Naive thymus-derived CD4-positive, alpha-beta T cell (primary cell): ENCODE measurements at regions of chr6 and their contacts with region 1.

Region 1: GRCh38 chr6:85404502-85405174 is 45.2 kb upstream of the NT5E start:
- DNase-seq: no peak
- ATAC-seq: no peak
- H3K4me3 ChIP-seq: no peak overlapping the region
- H3K4me3 Mint-ChIP-seq: peak overlapping the region in 2 of 10 donors; percentile 1 to 68
- H3K27ac ChIP-seq: no peak overlapping the region
- H3K27ac Mint-ChIP-seq: peak overlapping the region in 4 of 9 donors; percentile 11 to 83 (median 43)
- H3K4me1 ChIP-seq: no peaks in the 10 kb centered on the region
- H3K4me1 Mint-ChIP-seq: peaks cover 0 to 62% (median 7%) of the 10 kb centered on the region in 7 donors
- H3K27me3 ChIP-seq: no peaks in the 10 kb centered on the region
- H3K27me3 Mint-ChIP-seq: peaks cover 0 to 9% (median 4%) of the 10 kb centered on the region in 5 donors

Region 2: GRCh38 chr6:85443349-85444119 is 38.9 kb after region 1 on chr6:
- CTCF ChIA-PET with region 1: no interaction called
- POLR2A ChIA-PET with region 1: no interaction called
- intact Hi-C with region 1: no loop called
- DNase-seq: no peak
- ATAC-seq: no peak
- H3K4me3 ChIP-seq: no peak overlapping the region
- H3K4me3 Mint-ChIP-seq: no peak overlapping the region
- H3K27ac ChIP-seq: no peak overlapping the region
- H3K27ac Mint-ChIP-seq: no peak overlapping the region
- H3K4me1 ChIP-seq: no peaks in the 10 kb centered on the region
- H3K4me1 Mint-ChIP-seq: peaks cover 0 to 11% (median 0%) of the 10 kb centered on the region in 7 donors
- H3K27me3 ChIP-seq: no peaks in the 10 kb centered on the region
- H3K27me3 Mint-ChIP-seq: peaks cover 8 to 31% (median 23%) of the 10 kb centered on the region in 5 donors

Region 3: DNA sequence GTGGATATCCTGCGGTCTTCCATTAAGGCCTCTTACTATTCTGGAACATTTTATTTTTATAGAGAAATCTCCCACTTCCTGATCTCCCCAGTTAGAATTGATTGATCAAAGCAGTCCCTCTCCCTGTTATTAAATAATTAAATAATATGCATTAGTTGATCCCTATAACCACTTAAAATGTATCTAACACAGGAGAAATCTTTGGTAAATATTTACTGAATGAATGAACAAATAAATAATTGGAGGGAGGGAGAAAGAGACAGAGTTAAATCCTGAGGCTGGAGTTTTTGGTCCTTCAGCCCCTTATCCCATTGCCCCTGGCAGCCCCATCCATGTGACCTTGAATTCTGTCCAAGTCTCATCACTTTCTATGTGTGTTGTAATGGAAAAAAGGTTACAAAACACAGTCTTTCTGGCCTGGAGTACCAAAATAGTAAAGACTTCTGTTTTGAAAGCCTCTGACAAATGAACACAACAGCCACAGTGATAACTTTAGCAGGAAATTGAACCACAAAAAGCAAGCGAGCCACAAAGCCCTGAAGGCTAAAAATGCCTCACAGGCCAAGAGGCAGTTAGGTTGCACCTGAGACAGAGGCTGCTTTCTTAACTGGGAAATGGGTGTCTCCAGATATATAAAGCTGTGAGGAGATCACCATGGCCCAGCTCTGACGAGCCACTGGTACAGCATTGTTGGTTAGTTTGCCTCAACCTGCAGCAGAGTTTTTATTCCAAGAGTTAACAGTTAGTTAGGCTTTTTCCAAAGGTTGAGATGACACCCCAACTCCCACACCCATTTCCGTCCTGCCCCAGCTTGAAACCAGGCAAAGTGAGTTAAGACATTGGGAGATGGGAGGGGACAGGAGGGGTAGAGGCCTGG is 56.5 kb after region 1 on chr6:
- CTCF ChIA-PET with region 1: no interaction called
- POLR2A ChIA-PET with region 1: no interaction called
- intact Hi-C with region 1: loop called in 1 of 2 experiments (anchors 2 kb)
- DNase-seq: peak in 6 of 9 donors; percentile 17 to 53 (median 46)
- ATAC-seq: peak; percentile 54
- H3K4me3 ChIP-seq: no peak overlapping the region
- H3K4me3 Mint-ChIP-seq: peak overlapping the region in 7 of 10 donors; percentile 32 to 72 (median 68)
- H3K27ac ChIP-seq: no peak overlapping the region
- H3K27ac Mint-ChIP-seq: peak overlapping the region in 8 of 9 donors; percentile 38 to 92 (median 71)
- H3K4me1 ChIP-seq: peaks cover 9 to 25% of the 10 kb centered on the region in 2 donors
- H3K4me1 Mint-ChIP-seq: peaks cover 23 to 95% (median 63%) of the 10 kb centered on the region in 7 donors
- H3K27me3 ChIP-seq: no peaks in the 10 kb centered on the region
- H3K27me3 Mint-ChIP-seq: peaks cover 0 to 30% (median 28%) of the 10 kb centered on the region in 5 donors